ENCODE measurements at regions of chr19 and their contacts with region 1.

Region 1: DNA sequence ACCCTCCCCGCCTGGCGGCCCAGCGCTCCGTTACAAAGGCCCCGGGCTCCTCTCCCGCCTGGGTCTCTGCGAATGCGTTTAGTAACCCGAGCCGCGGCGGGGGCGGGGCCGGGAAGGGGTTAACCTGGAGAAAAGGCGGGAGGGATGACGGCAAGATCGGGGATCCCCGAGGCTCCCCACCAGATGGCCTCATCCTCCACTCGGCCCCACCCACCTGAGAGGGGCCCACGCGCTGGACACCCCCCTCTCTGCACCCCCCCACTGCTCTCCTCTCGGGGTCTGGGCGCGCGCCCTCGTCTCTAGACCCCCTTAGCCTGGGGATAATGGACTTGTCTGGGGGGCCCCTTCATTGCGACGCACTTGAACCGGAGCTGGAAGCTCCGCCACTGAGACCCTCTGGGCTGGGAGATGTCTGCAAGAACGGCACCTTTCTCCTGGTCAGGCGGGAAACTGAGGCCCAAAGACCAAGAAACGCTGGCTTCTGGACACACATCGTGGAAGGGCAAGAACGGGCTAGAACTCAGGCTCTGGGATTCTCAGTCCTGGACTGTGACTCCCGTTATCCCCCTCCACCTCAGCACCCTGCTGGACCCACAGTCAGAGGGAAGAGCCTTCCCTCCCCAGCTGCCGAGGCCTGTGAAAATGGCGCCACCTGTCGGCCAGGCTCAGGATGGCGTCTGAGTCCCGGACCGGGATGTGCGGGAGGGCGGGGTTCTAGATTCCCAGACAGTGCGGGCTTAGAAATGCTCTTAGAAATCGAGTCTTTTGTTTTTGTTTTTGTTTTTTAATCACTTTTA is 2.9 kb upstream of the LTBP4 start:
- DNase-seq: peak; percentile 81
- H3K4me3 ChIP-seq: peak overlapping the region; percentile 50
- H3K27ac ChIP-seq: no peak overlapping the region
- H3K27me3 ChIP-seq: no peaks in the 10 kb centered on the region
- CTCF ChIP-seq: peak; percentile 98

Region 2: GRCh38 chr19:40530091-40530901 is 68.0 kb before region 1 on chr19:
- in situ Hi-C with region 1: loop called (anchors 10 kb)
- DNase-seq: no peak
- H3K4me3 ChIP-seq: peak overlapping the region; percentile 15
- H3K27ac ChIP-seq: no peak overlapping the region
- H3K27me3 ChIP-seq: peaks cover 3% of the 10 kb centered on the region
- CTCF ChIP-seq: peak; percentile 42

Measured in brain microvascular endothelial cell (primary cell).